Motor neuron (in vitro differentiated cells): ENCODE measurements at regions of chr2 and their contacts with region 1.

Region 1: GRCh38 chr2:44955593-44956392 is 14.3 kb downstream of the SIX3 start:
- ATAC-seq: peak; percentile 22 to 84 (median 79)
- H3K4me3 ChIP-seq: peak overlapping the region; percentile 11 to 39 (median 29)
- H3K27ac ChIP-seq: no peak overlapping the region
- H3K4me1 ChIP-seq: peaks cover 0 to 10% of the 10 kb centered on the region in 2 donors

Region 2: GRCh38 chr2:44044281-44044720 is 911.5 kb before region 1 on chr2:
- in situ Hi-C with region 1: loop called in 1 of 9 experiments (anchors 25 kb)
- ATAC-seq: peak; percentile 99 to 100 (median 100)
- H3K4me3 ChIP-seq: no peak overlapping the region
- H3K27ac ChIP-seq: no peak overlapping the region
- H3K4me1 ChIP-seq: no peaks in the 10 kb centered on the region

Region 3: DNA sequence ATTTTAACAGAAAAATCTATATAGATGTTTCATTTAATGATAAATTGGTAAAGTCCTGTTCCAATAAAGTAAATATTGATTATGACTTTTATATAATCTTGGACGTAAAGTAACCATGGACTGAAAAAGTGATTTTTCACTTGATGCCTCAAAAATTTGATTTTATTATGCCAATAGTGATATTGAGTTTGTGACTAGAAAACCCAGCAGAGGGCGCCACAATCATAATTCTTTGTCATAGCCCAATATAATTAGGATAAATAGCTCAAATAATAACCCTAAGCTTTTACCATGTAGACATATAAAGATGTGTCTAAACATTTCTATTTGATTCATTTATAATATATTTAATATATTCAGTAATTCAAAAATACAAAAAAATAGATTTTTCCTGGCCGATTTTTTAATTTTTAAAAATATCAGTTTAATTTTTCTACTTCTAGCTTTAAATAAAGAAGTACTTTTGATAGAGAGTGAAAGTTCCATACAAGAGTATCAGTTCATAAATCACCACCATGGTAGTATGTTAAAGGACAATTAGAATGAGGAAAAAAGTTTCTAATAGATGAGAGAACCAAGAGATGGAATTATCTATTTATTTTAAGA is 563.4 kb before region 1 on chr2:
- in situ Hi-C with region 1: loop called in 2 of 9 experiments (anchors 25 kb)
- ATAC-seq: no peak
- H3K4me3 ChIP-seq: no peak overlapping the region
- H3K27ac ChIP-seq: no peak overlapping the region
- H3K4me1 ChIP-seq: no peaks in the 10 kb centered on the region

Region 4: DNA sequence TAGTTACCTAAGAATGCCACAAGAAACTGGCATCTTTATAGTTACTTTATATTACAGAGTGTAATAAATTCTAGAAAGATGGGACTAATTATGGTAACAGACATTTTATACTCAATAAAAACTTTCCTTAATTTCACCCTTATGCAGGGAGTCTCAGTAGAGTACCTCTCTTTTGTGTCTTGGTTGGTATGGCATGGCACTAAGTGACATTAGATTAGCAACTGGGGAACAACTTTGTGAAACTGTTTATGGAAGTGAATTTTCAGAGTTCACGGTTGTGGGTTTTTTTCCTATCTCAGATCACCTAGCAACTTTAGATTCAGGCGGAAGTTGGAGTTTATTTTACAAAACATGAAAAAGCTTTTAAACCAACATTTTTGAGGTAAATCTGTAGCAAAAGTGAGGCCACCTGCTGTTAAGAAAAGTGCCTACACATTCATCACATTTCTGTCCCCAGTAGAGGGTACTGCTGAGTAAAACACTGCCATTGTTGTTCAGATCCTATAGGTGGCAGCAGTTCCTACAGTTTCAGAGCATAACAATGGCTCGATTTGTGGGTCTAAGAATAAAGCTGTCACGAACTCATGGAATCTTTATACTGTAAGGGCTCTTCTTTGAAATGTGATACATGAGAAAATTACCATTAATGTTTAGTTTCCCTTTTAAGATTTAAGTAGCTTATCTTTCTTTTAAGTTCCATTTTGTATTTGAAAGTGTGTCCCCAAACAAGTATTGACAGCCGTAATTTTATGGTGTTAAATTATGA is 476.5 kb before region 1 on chr2:
- in situ Hi-C with region 1: loop called in 3 of 9 experiments (anchors 25 kb)
- ATAC-seq: peak; percentile 90 to 98 (median 96)
- H3K4me3 ChIP-seq: no peak overlapping the region
- H3K27ac ChIP-seq: no peak overlapping the region
- H3K4me1 ChIP-seq: no peaks in the 10 kb centered on the region

Region 5: GRCh38 chr2:44498551-44498950 is 457.2 kb before region 1 on chr2:
- in situ Hi-C with region 1: loop called in 4 of 9 experiments (anchors 10 to 25 kb)
- ATAC-seq: no peak
- H3K4me3 ChIP-seq: no peak overlapping the region
- H3K27ac ChIP-seq: no peak overlapping the region
- H3K4me1 ChIP-seq: no peaks in the 10 kb centered on the region

Region 6: DNA sequence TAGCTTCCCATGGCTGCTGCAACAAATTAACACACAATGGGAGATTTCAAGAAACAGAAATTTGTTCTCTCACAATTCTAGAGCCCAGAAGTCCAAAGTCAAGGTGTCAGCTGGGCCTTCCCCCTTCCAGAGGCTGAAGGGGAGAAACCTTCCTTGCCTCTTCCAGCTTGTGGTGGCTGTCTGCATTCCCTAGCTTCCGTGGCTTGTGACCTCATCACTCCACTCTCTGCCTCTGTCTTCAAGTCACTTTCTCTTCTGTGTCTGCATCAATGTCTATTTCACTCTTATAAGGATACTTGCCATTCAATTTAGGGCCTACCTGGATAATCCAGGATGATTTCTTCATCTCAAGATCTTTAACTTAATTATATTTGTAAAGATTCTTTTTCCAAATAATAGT is 672.1 kb after region 1 on chr2:
- in situ Hi-C with region 1: no loop called
- ATAC-seq: no peak
- H3K4me3 ChIP-seq: no peak overlapping the region
- H3K27ac ChIP-seq: no peak overlapping the region
- H3K4me1 ChIP-seq: no peaks in the 10 kb centered on the region